ENCODE measurements at regions of chr7 and their contacts with region 1.

Region 1: DNA sequence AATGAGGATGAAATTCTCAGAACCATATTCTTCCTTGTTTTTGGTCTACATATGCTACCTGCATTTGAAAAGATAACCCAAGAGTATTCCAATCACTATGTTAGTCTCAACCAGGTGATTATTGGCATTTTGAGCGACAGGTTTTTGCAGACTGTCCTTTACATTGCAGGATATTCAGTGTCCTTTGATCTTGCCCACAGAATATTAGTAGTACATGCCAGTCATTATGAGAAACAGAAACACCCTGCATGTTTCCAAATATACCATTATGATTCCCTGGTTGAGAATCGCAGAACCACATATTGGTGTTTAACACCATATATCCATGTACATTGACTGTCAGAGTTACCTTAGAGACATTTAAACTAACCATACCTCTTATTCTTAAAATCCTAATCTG is 30.6 kb downstream of the TMEM243 start:
- DNase-seq: no peak
- H3K4me3 ChIP-seq: no peak overlapping the region
- H3K27ac ChIP-seq: no peak overlapping the region
- H3K4me1 ChIP-seq: peaks cover 9% of the 10 kb centered on the region
- CTCF ChIP-seq: no peak

Region 2: GRCh38 chr7:87100326-87100725 is 88.6 kb before region 1 on chr7:
- CTCF ChIA-PET with region 1: no interaction called
- POLR2A ChIA-PET with region 1: no interaction called
- intact Hi-C with region 1: no loop called
- DNase-seq: no peak
- H3K4me3 ChIP-seq: no peak overlapping the region
- H3K27ac ChIP-seq: no peak overlapping the region
- H3K4me1 ChIP-seq: no peaks in the 10 kb centered on the region
- CTCF ChIP-seq: no peak

Region 3: GRCh38 chr7:87173471-87173870 is 15.5 kb before region 1 on chr7:
- CTCF ChIA-PET with region 1: interaction called, 4 read pairs
- POLR2A ChIA-PET with region 1: interaction called, 22 read pairs
- intact Hi-C with region 1: no loop called
- DNase-seq: no peak
- H3K4me3 ChIP-seq: no peak overlapping the region
- H3K27ac ChIP-seq: no peak overlapping the region
- H3K4me1 ChIP-seq: no peaks in the 10 kb centered on the region
- CTCF ChIP-seq: no peak

Region 4: DNA sequence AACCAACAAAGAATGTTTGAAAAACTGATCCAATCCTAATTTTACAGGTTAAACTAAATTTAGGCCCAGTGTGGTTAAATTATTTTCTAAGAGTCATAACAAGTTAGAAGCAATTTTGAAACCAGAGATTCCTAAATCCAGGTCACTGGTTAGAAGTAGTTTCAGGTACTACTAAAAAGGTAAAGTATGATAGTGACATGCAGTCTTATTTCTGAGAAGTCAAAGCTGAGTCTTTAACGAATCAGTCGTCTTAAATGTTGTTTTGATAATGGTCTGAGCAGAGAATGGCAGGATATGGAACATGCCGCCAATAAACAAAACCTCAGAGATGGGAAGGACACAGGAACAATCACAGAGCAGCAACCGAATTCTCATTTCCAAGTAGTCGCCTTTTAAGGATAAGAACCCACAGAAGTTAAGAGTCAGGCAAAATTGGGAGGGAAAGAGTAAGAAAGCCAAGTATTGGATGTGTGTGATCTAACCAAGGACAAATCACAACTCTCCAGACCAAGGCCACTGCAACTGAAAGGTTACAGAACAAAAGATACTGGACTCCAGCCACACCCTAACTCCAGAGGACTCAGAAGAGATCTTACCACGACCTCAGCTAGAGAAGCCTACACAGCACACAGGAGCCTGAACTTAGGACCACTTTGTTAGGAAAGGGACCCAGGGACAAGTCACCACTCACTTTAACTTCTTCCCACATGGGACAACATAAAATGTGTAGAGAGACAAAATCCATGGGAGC is 10.9 kb after region 1 on chr7:
- CTCF ChIA-PET with region 1: no interaction called
- POLR2A ChIA-PET with region 1: interaction called, 23 read pairs
- intact Hi-C with region 1: no loop called
- DNase-seq: no peak
- H3K4me3 ChIP-seq: no peak overlapping the region
- H3K27ac ChIP-seq: no peak overlapping the region
- H3K4me1 ChIP-seq: no peaks in the 10 kb centered on the region
- CTCF ChIP-seq: no peak

Region 5: GRCh38 chr7:87330942-87331341 is 142.0 kb after region 1 on chr7:
- CTCF ChIA-PET with region 1: no interaction called
- POLR2A ChIA-PET with region 1: no interaction called
- intact Hi-C with region 1: no loop called
- DNase-seq: peak; percentile 13
- H3K4me3 ChIP-seq: no peak overlapping the region
- H3K27ac ChIP-seq: no peak overlapping the region
- H3K4me1 ChIP-seq: no peaks in the 10 kb centered on the region
- CTCF ChIP-seq: no peak

Measured in OCI-LY7 (cell line).